A549 (cell line): ENCODE measurements at regions of chr11 and their contacts with region 1.

Region 1: GRCh38 chr11:32884770-32885384 is 7.7 kb upstream of the QSER1 start:
- DNase-seq: peak in 1 of 2 experiments; percentile 34
- ATAC-seq: peak; percentile 91
- H3K4me3 ChIP-seq: no peak overlapping the region
- H3K27ac ChIP-seq: no peak overlapping the region
- H3K4me1 ChIP-seq: no peaks in the 10 kb centered on the region
- CTCF ChIP-seq: peak; percentile 49
- EP300 ChIP-seq: no peak
- POLR2A ChIP-seq: no peak
- RAD21 ChIP-seq: peak; percentile 30 to 34; a peak in 3 of 5 replicates

Region 2: GRCh38 chr11:32870676-32871075 is 14.2 kb before region 1 on chr11:
- CTCF ChIA-PET with region 1: interaction called, 12 read pairs
- POLR2A ChIA-PET with region 1: no interaction called
- DNase-seq: peak in 1 of 2 experiments; percentile 40
- ATAC-seq: peak; percentile 85 to 90
- H3K4me3 ChIP-seq: no peak overlapping the region
- H3K27ac ChIP-seq: no peak overlapping the region
- H3K4me1 ChIP-seq: peaks cover 7% of the 10 kb centered on the region
- CTCF ChIP-seq: peak; percentile 30; the same call in 1 of the 3 replicates
- EP300 ChIP-seq: no peak
- POLR2A ChIP-seq: no peak
- RAD21 ChIP-seq: peak; percentile 20 to 28; a peak in 1 of 5 replicates